H1 (cell line): ENCODE measurements at regions of chr1 and their contacts with region 1.

Region 1: GRCh38 chr1:109643385-109644230 is 12.3 kb upstream of the GSTM4 start:
- DNase-seq: peak; percentile 74 to 99
- H3K4me3 ChIP-seq: no peak overlapping the region
- H3K27ac ChIP-seq: no peak overlapping the region
- H3K4me1 ChIP-seq: no peaks in the 10 kb centered on the region; a peak in 1 of 7 replicates
- H3K27me3 ChIP-seq: no peaks in the 10 kb centered on the region; a peak in 2 of 7 replicates
- CTCF ChIP-seq: peak; percentile 83 to 98 (median 92)
- EP300 ChIP-seq: 0 out of 3 replicates have a peak, but pooled peaks of 1 of the 2 experiments have one; percentile 12
- POLR2A ChIP-seq: no peak
- RAD21 ChIP-seq: peak; percentile 89 to 92

Region 2: DNA sequence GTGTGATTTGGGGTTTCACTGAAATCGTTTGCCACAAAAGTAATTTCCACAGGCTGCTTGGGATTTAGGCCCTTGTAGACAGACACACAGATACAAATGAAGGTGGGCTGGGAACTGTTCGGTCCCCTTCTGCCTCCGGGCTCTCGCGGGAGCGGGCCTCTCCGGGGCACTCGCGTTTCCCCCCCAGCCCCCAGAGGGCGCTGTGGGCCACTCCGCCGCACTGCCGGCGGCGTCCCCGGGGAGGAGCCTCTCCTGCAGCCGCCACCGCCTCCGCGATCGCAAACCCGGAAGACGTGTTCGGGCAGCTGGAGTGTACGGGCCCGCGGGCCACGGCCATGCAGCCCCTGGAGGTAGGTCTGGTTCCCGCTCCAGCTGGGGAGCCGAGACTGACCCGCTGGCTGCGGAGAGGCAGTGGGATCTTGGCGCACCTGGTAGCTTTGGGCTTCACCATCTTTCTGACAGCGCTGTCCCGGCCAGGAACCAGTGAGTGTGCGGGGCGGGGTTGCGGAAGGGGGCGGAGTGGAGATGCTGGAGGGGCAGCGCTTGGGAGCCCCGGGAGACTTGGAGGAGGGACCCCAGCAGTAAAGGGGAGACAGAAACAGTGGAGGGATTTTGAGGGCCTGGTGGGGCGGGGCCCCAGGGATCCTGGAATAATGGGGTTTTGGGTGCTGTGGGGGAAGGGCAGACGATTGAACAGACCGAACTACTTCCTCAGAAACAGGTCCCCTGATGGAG is 149.6 kb before region 1 on chr1 and contains the start of gene CYB561D1:
- CTCF ChIA-PET with region 1: interaction called, 14 read pairs
- POLR2A ChIA-PET with region 1: no interaction called
- DNase-seq: peak in 1 of 2 experiments; percentile 96
- H3K4me3 ChIP-seq: peak within 1 kb of the TSS; percentile 58 to 90 (median 80)
- H3K27ac ChIP-seq: no peak within 1 kb of the TSS
- H3K4me1 ChIP-seq: peaks cover 0 to 11% (median 4%) of the 10 kb centered on the region in 4 experiments; a peak in 4 of 7 replicates
- H3K27me3 ChIP-seq: no peaks in the 10 kb centered on the region
- CTCF ChIP-seq: peak; percentile 76 to 91 (median 81)
- EP300 ChIP-seq: peak in 1 of 2 experiments; percentile 38; a peak in 1 of 3 replicates
- POLR2A ChIP-seq: 0 out of 3 replicates have a peak, but pooled peaks of 1 of the 2 experiments have one; percentile 20
- RAD21 ChIP-seq: peak; percentile 43 to 52; a peak in 3 of 4 replicates
- total RNA-seq, gene CYB561D1: 3.6 and 4.3 TPM in 2 replicates

Region 3: GRCh38 chr1:109564194-109564878 is 79.3 kb before region 1 on chr1:
- CTCF ChIA-PET with region 1: interaction called, 19 read pairs
- POLR2A ChIA-PET with region 1: no interaction called
- DNase-seq: no peak
- H3K4me3 ChIP-seq: peak overlapping the region in 3 of 4 experiments; percentile 2 to 30 (median 6); a peak in 3 of 8 replicates
- H3K27ac ChIP-seq: peak overlapping the region; percentile 59
- H3K4me1 ChIP-seq: peaks cover 0 to 23% (median 7%) of the 10 kb centered on the region in 4 experiments; a peak in 6 of 7 replicates
- H3K27me3 ChIP-seq: no peaks in the 10 kb centered on the region
- CTCF ChIP-seq: no peak
- EP300 ChIP-seq: no peak
- POLR2A ChIP-seq: peak in 1 of 2 experiments; percentile 36; a peak in 1 of 3 replicates
- RAD21 ChIP-seq: no peak

Region 4: DNA sequence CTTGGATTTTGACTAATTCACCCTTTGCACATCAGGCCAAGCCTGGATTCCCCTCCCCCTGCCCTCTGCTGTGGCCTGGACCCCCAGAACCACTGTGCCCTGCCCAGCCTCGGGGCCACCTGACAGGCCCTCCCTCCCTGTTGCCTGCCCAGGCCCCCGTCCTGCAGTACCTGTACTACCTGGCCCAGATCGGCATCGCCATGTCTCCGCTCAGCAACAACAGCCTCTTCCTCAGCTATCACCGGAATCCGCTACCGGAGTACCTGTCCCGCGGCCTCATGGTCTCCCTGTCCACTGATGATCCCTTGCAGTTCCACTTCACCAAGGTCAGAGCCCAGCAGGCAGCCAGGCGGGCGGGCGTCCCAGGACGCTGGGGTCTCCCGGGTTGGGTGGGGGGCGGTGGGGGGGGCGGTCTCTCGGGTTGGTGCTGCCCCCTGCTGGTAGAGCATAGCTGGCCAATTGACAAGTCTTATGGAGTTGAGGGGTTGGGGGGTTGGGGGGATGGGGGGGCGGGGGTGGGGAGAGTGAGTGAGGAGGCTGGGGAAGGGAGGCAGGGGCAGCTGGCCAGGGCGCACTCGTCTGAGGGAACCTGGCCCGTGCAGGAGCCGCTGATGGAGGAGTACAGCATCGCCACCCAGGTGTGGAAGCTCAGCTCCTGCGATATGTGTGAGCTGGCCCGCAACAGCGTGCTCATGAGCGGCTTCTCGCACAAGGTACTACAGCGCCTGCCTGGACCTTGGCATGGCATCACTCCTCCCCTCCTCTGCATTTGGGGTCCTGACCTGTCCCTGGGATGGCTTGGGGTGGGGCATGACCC is 13.3 kb before region 1 on chr1:
- CTCF ChIA-PET with region 1: interaction called, 63 read pairs
- POLR2A ChIA-PET with region 1: no interaction called
- DNase-seq: peak in 1 of 2 experiments; percentile 69
- H3K4me3 ChIP-seq: no peak overlapping the region
- H3K27ac ChIP-seq: no peak overlapping the region
- H3K4me1 ChIP-seq: peaks cover 0 to 2% (median 0%) of the 10 kb centered on the region in 4 experiments; a peak in 2 of 7 replicates
- H3K27me3 ChIP-seq: no peaks in the 10 kb centered on the region
- CTCF ChIP-seq: no peak
- EP300 ChIP-seq: no peak
- POLR2A ChIP-seq: no peak
- RAD21 ChIP-seq: no peak; a peak in 1 of 4 replicates

Region 5: DNA sequence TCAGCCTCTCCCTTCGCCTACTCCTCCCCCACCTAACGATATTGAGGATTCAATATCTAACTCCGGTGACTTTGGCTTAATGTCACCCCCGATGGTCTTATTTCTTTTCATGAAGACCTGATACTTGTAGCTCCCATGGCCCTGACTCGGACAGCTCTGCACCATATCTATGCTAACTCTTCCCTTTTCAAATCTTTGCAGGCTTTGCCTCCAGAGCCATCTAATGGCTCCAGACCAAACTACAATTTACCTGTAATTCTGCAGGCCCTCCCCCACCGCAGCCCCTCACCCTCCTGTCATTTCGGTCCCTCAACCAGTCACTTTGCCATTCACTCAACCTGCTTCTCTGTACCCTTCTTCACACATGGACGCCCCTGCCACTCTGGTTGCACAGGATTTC is 60.6 kb after region 1 on chr1:
- CTCF ChIA-PET with region 1: interaction called, 19 read pairs
- POLR2A ChIA-PET with region 1: no interaction called
- DNase-seq: no peak
- H3K4me3 ChIP-seq: no peak overlapping the region
- H3K27ac ChIP-seq: no peak overlapping the region
- H3K4me1 ChIP-seq: no peaks in the 10 kb centered on the region
- H3K27me3 ChIP-seq: no peaks in the 10 kb centered on the region
- CTCF ChIP-seq: peak in 2 of 3 experiments; percentile 45 to 54; a peak in 3 of 4 replicates
- EP300 ChIP-seq: no peak
- POLR2A ChIP-seq: no peak
- RAD21 ChIP-seq: peak; percentile 64 to 68

Region 6: GRCh38 chr1:109773146-109773899 is 129.7 kb after region 1 on chr1:
- CTCF ChIA-PET with region 1: interaction called, 293 read pairs
- POLR2A ChIA-PET with region 1: interaction called, 3 read pairs
- DNase-seq: peak; percentile 34 to 66
- H3K4me3 ChIP-seq: no peak overlapping the region
- H3K27ac ChIP-seq: no peak overlapping the region
- H3K4me1 ChIP-seq: peaks cover 0 to 4% (median 0%) of the 10 kb centered on the region in 4 experiments; a peak in 1 of 7 replicates
- H3K27me3 ChIP-seq: no peaks in the 10 kb centered on the region; a peak in 2 of 7 replicates
- CTCF ChIP-seq: peak; percentile 93 to 97 (median 95)
- EP300 ChIP-seq: no peak
- POLR2A ChIP-seq: no peak
- RAD21 ChIP-seq: peak; percentile 97